ENCODE measurements at regions of chr1 and their contacts with region 1.

Region 1: GRCh38 chr1:160519642-160520435 is 3.2 kb downstream of the SLAMF6 start:
- DNase-seq: peak; percentile 73
- ATAC-seq: peak; percentile 64
- H3K4me3 Mint-ChIP-seq: peak overlapping the region; percentile 90
- H3K27ac Mint-ChIP-seq: peak overlapping the region; percentile 97
- H3K4me1 Mint-ChIP-seq: peaks cover 75% of the 10 kb centered on the region
- H3K27me3 Mint-ChIP-seq: no peaks in the 10 kb centered on the region
- CTCF ChIP-seq: peak; percentile 39

Region 2: GRCh38 chr1:160428655-160429054 is 91.2 kb before region 1 on chr1:
- CTCF ChIA-PET with region 1: interaction called, 4 read pairs
- POLR2A ChIA-PET with region 1: interaction called, 6 read pairs
- intact Hi-C with region 1: loop called (anchors 5 kb)
- DNase-seq: peak; percentile 42
- ATAC-seq: peak; percentile 53
- H3K4me3 Mint-ChIP-seq: peak overlapping the region; percentile 54
- H3K27ac Mint-ChIP-seq: peak overlapping the region; percentile 85
- H3K4me1 Mint-ChIP-seq: peaks cover 61% of the 10 kb centered on the region
- H3K27me3 Mint-ChIP-seq: no peaks in the 10 kb centered on the region
- CTCF ChIP-seq: peak; percentile 74

Region 3: GRCh38 chr1:160451119-160451858 is 68.5 kb before region 1 on chr1:
- CTCF ChIA-PET with region 1: interaction called, 6 read pairs
- POLR2A ChIA-PET with region 1: no interaction called
- intact Hi-C with region 1: loop called (anchors 5 kb)
- DNase-seq: no peak
- ATAC-seq: peak; percentile 43
- H3K4me3 Mint-ChIP-seq: peak overlapping the region; percentile 42
- H3K27ac Mint-ChIP-seq: peak overlapping the region; percentile 90
- H3K4me1 Mint-ChIP-seq: peaks cover 74% of the 10 kb centered on the region
- H3K27me3 Mint-ChIP-seq: no peaks in the 10 kb centered on the region
- CTCF ChIP-seq: no peak

Region 4: DNA sequence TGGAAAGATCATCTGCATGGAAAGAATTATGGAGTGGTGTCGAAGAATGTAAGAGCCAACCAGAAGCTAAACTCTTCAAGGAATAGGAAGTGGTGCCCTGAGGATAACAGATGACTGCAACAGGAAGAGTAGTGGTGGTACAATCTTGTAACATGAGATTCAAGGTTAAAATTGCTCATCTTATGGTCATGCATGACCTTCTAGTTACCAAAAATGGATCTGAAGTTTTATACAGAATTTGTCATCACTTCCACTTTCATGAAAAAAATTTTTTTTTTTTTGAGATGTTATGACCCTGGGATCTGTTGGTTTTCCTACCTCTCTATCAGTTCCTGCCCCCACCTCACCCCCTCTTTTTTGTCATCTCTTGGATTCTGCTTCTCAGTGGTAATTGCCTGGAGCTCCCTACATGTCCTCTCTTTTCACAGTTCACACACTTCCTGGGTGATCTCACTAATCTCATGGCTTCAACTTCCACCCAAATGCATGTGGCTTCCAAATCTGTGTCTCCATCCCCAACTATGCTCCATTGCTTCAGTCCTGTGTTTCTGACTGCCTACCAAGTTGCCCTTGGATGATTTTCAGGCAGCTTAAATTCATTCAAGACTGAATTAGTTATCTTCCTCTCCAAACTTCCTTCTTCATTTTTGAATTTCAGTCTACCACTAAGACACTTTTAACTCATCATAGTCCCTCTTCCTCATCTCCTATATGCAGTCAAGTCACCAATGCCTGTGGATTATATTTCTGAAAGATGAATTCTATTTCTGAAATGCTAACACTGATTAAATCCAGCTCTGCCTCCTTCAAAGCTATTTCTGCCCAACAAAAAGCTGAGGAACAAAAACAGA is 45.2 kb before region 1 on chr1:
- CTCF ChIA-PET with region 1: interaction called, 7 read pairs
- POLR2A ChIA-PET with region 1: interaction called, 4 read pairs
- intact Hi-C with region 1: loop called (anchors 5 kb)
- DNase-seq: no peak
- ATAC-seq: peak; percentile 92
- H3K4me3 Mint-ChIP-seq: no peak overlapping the region
- H3K27ac Mint-ChIP-seq: no peak overlapping the region
- H3K4me1 Mint-ChIP-seq: peaks cover 2% of the 10 kb centered on the region
- H3K27me3 Mint-ChIP-seq: no peaks in the 10 kb centered on the region
- CTCF ChIP-seq: no peak

Region 5: GRCh38 chr1:160534823-160535605 is 15.2 kb after region 1 on chr1:
- CTCF ChIA-PET with region 1: interaction called, 4 read pairs
- POLR2A ChIA-PET with region 1: interaction called, 17 read pairs
- intact Hi-C with region 1: no loop called
- DNase-seq: no peak
- ATAC-seq: no peak
- H3K4me3 Mint-ChIP-seq: no peak overlapping the region
- H3K27ac Mint-ChIP-seq: no peak overlapping the region
- H3K4me1 Mint-ChIP-seq: peaks cover 31% of the 10 kb centered on the region
- H3K27me3 Mint-ChIP-seq: no peaks in the 10 kb centered on the region
- CTCF ChIP-seq: peak; percentile 13

Region 6: GRCh38 chr1:160575112-160575664 is 55.3 kb after region 1 on chr1:
- CTCF ChIA-PET with region 1: interaction called, 3 read pairs
- POLR2A ChIA-PET with region 1: no interaction called
- intact Hi-C with region 1: loop called (anchors 5 kb)
- DNase-seq: peak; percentile 31
- ATAC-seq: peak; percentile 59
- H3K4me3 Mint-ChIP-seq: peak overlapping the region; percentile 85
- H3K27ac Mint-ChIP-seq: peak overlapping the region; percentile 94
- H3K4me1 Mint-ChIP-seq: peaks cover 85% of the 10 kb centered on the region
- H3K27me3 Mint-ChIP-seq: no peaks in the 10 kb centered on the region
- CTCF ChIP-seq: no peak

Measured in activated CD8-positive, alpha-beta T cell treated with anti-CD3 and anti-CD28 coated beads for 36 hours (primary cell).